ENCODE measurements at regions of chr1 and their contacts with region 1.

Region 1: DNA sequence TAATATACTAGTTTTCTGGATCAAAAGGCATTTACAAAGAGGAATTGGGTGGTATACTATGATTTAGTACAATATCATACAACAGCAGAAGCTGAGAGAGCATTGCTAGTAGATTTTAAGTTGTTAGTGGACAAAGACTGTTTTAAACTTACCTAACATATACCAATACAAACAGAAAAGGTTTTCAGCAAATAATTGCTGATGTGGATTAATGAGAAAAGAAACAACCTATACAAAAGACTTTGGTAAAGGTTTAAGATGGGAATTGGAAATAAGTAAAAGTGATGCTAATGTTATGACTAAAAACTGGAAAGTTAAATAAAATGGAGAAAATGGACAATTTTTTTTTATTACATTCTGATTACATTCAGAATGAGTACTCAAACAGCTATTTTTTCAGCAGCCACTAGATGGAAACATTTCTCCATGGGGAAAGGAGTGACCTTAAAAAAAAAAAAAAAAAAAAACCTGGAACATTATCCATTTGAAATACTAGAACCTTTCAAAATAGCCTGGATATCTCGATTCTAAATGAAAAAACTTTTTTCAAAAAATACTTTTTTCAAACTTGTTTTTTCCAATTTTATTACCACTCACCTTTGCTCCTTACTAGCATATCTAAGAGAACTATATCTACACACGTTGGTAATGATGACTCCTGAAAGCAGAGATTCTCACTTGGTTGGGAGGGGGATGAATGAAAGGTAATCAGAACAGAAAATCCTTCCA is 55.4 kb downstream of the EPRS1 start:
- DNase-seq: no peak
- H3K4me3 ChIP-seq: no peak overlapping the region
- H3K27ac ChIP-seq: no peak overlapping the region
- H3K4me1 ChIP-seq: no peaks in the 10 kb centered on the region
- H3K27me3 ChIP-seq: no peaks in the 10 kb centered on the region
- CTCF ChIP-seq: peak; percentile 49

Region 2: GRCh38 chr1:220099826-220100225 is 108.9 kb after region 1 on chr1:
- intact Hi-C with region 1: loop called (anchors 10 kb)
- DNase-seq: no peak
- H3K4me3 ChIP-seq: no peak overlapping the region
- H3K27ac ChIP-seq: no peak overlapping the region
- H3K4me1 ChIP-seq: peaks cover 5% of the 10 kb centered on the region
- H3K27me3 ChIP-seq: no peaks in the 10 kb centered on the region
- CTCF ChIP-seq: no peak

Region 3: DNA sequence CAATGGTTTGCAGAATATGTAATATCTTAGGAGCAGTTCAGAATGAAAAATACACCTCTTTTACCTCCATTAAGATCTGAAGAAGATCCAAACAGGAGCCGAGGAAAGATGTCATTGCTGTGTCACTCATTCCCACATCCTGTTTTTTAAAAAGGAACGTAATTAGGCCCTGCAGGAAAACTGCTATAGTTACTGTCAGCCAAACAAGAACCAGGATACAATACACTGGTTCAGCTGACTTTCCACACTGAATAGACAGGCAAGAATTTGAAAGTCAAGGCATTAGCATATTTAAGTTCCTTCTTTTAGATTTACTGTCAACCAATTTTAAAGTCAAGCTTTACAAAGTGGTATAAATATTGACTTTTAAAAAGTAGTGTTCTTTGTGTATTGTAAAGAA is 166.8 kb after region 1 on chr1:
- intact Hi-C with region 1: no loop called
- DNase-seq: no peak
- H3K4me3 ChIP-seq: no peak overlapping the region
- H3K27ac ChIP-seq: no peak overlapping the region
- H3K4me1 ChIP-seq: no peaks in the 10 kb centered on the region
- H3K27me3 ChIP-seq: no peaks in the 10 kb centered on the region
- CTCF ChIP-seq: no peak

Region 4: GRCh38 chr1:220500372-220500771 is 509.4 kb after region 1 on chr1:
- intact Hi-C with region 1: no loop called
- DNase-seq: no peak
- H3K4me3 ChIP-seq: no peak overlapping the region
- H3K27ac ChIP-seq: no peak overlapping the region
- H3K4me1 ChIP-seq: no peaks in the 10 kb centered on the region
- H3K27me3 ChIP-seq: no peaks in the 10 kb centered on the region
- CTCF ChIP-seq: no peak

Measured in colonic mucosa (tissue), 4 donors.